ENCODE measurements at regions of chr19 and their contacts with region 1.

Region 1: GRCh38 chr19:8513687-8514504 is at the start of gene ZNF414:
- DNase-seq: peak in 1 of 2 donors; percentile 99
- H3K4me3 ChIP-seq: peak within 1 kb of the TSS; percentile 56 to 96
- H3K27ac ChIP-seq: peak within 1 kb of the TSS; percentile 95
- H3K4me1 ChIP-seq: peaks cover 39% of the 10 kb centered on the region
- H3K27me3 ChIP-seq: no peaks in the 10 kb centered on the region
- CTCF ChIP-seq: no peak
- POLR2A ChIP-seq: peak; percentile 45 to 71
- total RNA-seq, gene ZNF414: 27.5 TPM

Region 2: GRCh38 chr19:8167985-8168384 is 345.9 kb before region 1 on chr19:
- intact Hi-C with region 1: no loop called
- DNase-seq: no peak
- H3K4me3 ChIP-seq: no peak overlapping the region
- H3K27ac ChIP-seq: no peak overlapping the region
- H3K4me1 ChIP-seq: no peaks in the 10 kb centered on the region
- H3K27me3 ChIP-seq: no peaks in the 10 kb centered on the region
- CTCF ChIP-seq: no peak
- POLR2A ChIP-seq: no peak

Region 3: DNA sequence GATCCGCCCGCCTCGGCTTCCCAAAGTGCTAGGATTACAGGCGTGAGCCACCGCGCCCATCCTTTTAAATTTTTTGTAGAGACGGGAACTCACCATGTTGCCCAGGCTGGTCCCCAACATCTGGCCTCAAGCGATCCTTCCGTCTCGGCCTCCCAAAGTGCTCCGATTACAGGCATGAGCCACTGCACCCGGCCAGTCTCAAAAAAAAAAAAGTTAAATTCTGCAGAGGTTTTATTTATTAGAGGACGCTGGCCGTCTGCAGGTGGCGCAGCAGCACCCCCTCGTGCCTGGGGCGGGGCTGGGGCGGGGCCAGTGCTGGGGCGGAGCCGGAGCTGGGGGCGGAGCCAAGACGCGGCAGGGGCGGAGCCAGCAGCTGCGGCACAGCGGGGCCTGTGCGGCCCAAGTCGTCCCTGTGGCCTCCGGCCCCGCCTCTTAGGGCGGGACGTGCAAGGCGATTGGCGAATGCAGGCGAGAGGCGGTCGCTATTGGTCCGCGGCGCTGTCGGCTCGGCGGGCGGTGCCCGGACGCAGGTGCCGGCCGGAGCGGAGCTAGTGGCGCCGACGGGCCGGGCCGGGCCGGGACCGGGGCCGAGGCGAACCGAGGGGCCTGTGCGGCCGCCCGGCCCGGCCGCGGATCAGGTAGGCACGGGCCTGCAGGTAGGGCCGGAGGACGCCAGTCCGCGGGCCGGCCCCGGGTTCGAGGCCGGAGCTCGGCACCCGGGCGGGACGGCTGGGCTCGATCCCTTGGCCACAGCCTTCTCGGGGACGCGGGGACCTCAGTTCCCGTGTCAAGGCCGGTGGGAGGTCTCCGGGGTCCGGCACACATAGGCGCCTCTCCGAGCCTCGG is 100.9 kb before region 1 on chr19 and contains the start of gene MARCHF2:
- intact Hi-C with region 1: loop called (anchors 5 kb)
- DNase-seq: peak in 1 of 2 donors; percentile 97
- H3K4me3 ChIP-seq: peak within 1 kb of the TSS; percentile 69 to 87
- H3K27ac ChIP-seq: no peak within 1 kb of the TSS
- H3K4me1 ChIP-seq: peaks cover 23% of the 10 kb centered on the region
- H3K27me3 ChIP-seq: no peaks in the 10 kb centered on the region
- CTCF ChIP-seq: peak; percentile 16 to 83 (median 39)
- POLR2A ChIP-seq: peak in 1 of 2 donors; percentile 55
- total RNA-seq, gene MARCHF2: 146 TPM